Endothelial cell of umbilical vein (primary cell): ENCODE measurements at regions of chr20 and their contacts with region 1.

Region 1: DNA sequence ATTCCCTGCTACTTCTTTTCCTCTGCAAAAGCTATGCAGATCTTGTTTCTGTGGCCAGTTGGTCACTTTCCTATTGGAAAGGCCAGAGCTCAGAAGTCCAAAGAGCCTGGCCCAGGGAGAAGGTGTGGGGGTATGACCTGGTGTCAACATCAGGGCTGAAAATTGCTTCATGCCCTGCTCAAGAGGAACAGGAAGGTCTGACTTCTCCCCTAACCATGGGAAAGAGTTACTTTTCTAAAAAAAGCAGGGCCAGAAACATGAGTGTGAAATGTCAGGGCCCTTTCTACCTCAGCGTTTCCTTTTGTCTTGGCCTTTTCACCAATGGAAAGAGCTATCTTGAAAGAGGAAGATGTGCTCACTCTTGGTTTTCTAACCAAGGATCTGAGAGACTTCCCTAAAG is 117.4 kb downstream of the MAFB start:
- DNase-seq: no peak
- H3K4me3 ChIP-seq: no peak overlapping the region
- H3K27ac ChIP-seq: no peak overlapping the region
- H3K4me1 ChIP-seq: no peaks in the 10 kb centered on the region
- H3K27me3 ChIP-seq: no peaks in the 10 kb centered on the region
- CTCF ChIP-seq: no peak
- POLR2A ChIP-seq: no peak

Region 2: DNA sequence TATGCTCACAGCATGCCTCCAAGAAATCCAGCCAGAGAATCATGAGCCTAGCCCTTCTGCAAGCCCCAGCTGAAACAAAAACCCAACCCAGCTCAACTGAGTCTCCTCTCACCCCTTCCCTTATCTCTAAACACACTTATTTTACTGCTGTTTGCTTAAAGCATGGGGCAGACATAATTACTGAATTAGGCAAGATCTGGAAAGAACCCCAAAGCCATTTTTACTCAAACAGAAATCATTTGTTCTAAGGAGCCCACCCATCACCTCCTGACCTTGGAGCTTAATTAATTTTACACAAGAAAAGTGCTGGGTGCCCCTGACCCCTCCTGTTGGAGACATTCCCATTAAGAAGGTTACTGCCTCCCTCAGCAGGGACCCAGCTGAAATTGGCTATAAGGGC is 174.2 kb before region 1 on chr20:
- CTCF ChIA-PET with region 1: no interaction called
- POLR2A ChIA-PET with region 1: no interaction called
- dilution Hi-C with region 1: loop called (anchors 10 kb)
- intact Hi-C with region 1: no loop called
- DNase-seq: no peak
- H3K4me3 ChIP-seq: no peak overlapping the region
- H3K27ac ChIP-seq: no peak overlapping the region
- H3K4me1 ChIP-seq: no peaks in the 10 kb centered on the region
- H3K27me3 ChIP-seq: no peaks in the 10 kb centered on the region
- CTCF ChIP-seq: no peak
- POLR2A ChIP-seq: no peak